PC-3 (cell line): ENCODE measurements at regions of chr11 and their contacts with region 1.

Region 1: DNA sequence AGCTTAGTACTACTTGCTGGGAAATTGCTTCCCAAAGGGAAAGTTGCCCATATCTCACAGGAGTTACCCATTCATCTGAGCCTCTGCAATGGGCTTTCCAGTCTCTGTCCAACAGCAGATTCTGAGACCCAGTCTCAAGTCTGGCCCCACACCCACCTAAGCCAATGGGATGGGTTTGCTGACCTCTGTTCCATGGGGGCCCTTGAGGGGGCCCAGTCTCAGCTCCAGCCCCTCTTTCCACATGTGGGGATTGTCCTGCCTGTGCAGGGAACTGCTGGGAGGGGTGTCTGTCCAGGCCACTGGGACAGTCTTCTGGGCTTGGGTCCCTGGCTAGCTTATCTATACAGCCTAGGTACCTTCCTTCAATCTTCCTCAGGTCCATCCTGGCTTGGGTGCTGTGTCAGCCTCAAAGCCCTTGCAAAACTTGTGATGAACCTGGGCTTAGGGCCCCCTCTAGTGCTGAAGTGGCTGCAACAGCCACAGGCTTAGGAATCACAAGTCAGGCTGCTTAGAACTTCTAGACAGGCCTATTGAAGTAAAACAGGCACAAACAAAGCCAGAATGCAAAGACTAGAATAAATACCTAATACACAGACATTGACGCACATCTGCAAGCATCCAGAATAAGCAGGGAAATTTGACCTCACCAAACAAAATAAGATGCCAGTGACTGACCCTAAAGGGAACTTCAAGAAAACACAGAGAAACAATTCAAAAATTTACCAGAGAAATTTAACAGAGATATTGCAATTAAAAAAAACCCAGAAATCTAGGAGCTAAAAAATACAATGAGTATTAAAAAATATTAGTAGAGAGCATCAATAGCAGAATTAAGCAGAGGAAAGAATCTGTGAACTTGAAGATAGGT is 11.7 kb upstream of the PATL1 start:
- DNase-seq: peak; percentile 87
- ATAC-seq: peak; percentile 100
- H3K4me3 ChIP-seq: no peak overlapping the region
- H3K27ac ChIP-seq: no peak overlapping the region
- H3K4me1 ChIP-seq: no peaks in the 10 kb centered on the region
- H3K27me3 ChIP-seq: no peaks in the 10 kb centered on the region
- CTCF ChIP-seq: peak; percentile 97

Region 2: DNA sequence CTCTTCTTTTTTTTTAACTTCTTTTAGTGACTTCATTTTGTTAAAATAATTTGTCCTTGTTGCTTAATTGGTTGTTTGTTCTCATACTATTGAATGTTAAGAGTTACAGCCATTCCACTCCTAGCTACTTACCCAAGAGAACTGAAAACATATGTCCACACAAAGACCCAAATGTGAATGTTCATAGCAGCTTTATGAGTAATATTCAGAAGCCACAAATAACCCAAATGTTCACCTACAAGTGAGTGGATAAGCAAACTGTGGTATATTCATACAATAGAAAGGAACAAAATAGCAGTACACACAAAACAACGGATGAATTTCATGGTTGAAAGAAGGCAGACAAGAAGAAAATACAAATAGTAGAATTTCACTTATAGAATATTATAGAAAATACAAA is 178.6 kb before region 1 on chr11:
- CTCF ChIA-PET with region 1: no interaction called
- POLR2A ChIA-PET with region 1: no interaction called
- intact Hi-C with region 1: no loop called
- DNase-seq: no peak
- ATAC-seq: no peak
- H3K4me3 ChIP-seq: no peak overlapping the region
- H3K27ac ChIP-seq: no peak overlapping the region
- H3K4me1 ChIP-seq: no peaks in the 10 kb centered on the region
- H3K27me3 ChIP-seq: peaks cover 75% of the 10 kb centered on the region
- CTCF ChIP-seq: no peak

Region 3: GRCh38 chr11:59574467-59574866 is 106.1 kb before region 1 on chr11:
- CTCF ChIA-PET with region 1: no interaction called
- POLR2A ChIA-PET with region 1: no interaction called
- intact Hi-C with region 1: no loop called
- DNase-seq: no peak
- ATAC-seq: peak; percentile 29
- H3K4me3 ChIP-seq: no peak overlapping the region
- H3K27ac ChIP-seq: no peak overlapping the region
- H3K4me1 ChIP-seq: no peaks in the 10 kb centered on the region; the same call in 1 of the 2 replicates
- H3K27me3 ChIP-seq: no peaks in the 10 kb centered on the region
- CTCF ChIP-seq: no peak

Region 4: DNA sequence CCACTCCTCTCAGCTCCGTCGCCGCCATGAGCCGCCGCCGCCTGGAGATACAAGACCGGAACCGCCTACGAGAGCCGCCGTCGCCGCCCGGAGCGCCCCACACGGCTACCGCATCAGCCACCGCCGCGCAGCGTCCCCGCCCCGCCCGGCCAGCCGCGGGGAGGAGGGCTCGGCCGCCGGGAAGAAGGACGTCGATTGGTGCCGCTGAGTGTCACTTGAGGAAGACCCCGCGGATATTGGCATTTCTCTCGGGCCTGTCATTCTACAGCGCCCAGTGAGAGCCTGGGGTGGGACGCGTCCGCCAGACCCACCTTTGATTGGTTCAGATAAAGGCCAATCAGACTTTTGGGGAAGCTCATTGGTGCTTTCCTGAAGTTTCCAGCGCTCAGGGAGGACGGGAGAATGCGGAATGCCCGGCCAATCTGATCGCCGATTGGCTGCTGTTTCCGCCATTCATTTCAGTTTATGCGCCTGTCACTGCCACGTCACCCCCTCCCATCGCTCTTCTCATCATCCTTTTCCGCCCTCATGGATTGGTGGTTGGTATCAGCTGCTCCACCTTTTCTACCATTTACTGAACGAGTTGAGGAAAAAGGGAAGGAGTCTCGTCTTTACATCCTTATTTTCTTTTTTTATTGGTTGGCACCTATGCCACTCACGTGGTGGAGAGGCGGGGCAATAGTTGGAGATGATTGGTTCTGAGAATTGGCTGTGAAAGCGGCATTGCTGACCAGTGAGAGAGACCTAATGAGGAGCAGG is 64.7 kb before region 1 on chr11 and contains the start of gene OSBP:
- CTCF ChIA-PET with region 1: no interaction called
- POLR2A ChIA-PET with region 1: no interaction called
- intact Hi-C with region 1: no loop called
- DNase-seq: peak; percentile 100
- ATAC-seq: peak; percentile 86
- H3K4me3 ChIP-seq: peak within 1 kb of the TSS; percentile 95
- H3K27ac ChIP-seq: peak within 1 kb of the TSS; percentile 35
- H3K4me1 ChIP-seq: peaks cover 39% of the 10 kb centered on the region
- H3K27me3 ChIP-seq: no peaks in the 10 kb centered on the region
- CTCF ChIP-seq: no peak
- total RNA-seq, gene OSBP: 36.3 and 59.4 TPM in 2 replicates

Region 5: DNA sequence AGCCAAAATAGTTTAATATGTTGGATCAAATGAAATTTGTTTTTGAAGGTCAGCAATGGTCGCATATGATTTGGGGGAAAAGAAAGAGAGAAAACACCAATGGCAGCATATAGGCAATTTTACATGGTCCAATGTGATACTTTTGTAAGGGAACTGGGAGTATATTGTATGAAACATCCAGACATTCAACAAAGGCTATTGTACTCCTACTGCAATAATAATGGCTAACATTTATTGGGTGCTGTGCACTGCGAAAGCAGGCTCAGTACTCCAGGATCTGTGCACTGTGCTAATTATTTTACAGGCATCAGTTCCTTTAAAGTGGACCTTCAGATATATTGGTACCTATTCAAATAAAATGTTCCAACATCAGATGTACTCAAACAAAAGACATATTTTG is 39.0 kb after region 1 on chr11:
- CTCF ChIA-PET with region 1: no interaction called
- POLR2A ChIA-PET with region 1: no interaction called
- intact Hi-C with region 1: no loop called
- DNase-seq: no peak
- ATAC-seq: no peak
- H3K4me3 ChIP-seq: no peak overlapping the region
- H3K27ac ChIP-seq: no peak overlapping the region
- H3K4me1 ChIP-seq: no peaks in the 10 kb centered on the region
- H3K27me3 ChIP-seq: peaks cover 85% of the 10 kb centered on the region
- CTCF ChIP-seq: no peak

Region 6: GRCh38 chr11:60420015-60420414 is 739.5 kb after region 1 on chr11:
- CTCF ChIA-PET with region 1: interaction called, 11 read pairs
- POLR2A ChIA-PET with region 1: no interaction called
- intact Hi-C with region 1: no loop called
- DNase-seq: no peak
- ATAC-seq: no peak
- H3K4me3 ChIP-seq: no peak overlapping the region
- H3K27ac ChIP-seq: no peak overlapping the region
- H3K4me1 ChIP-seq: no peaks in the 10 kb centered on the region
- H3K27me3 ChIP-seq: peaks cover 34% of the 10 kb centered on the region
- CTCF ChIP-seq: no peak